GM10248 (cell line): ENCODE measurements at regions of chr5 and their contacts with region 1.

Region 1: GRCh38 chr5:79062436-79062835 is 7.0 kb downstream of the DMGDH start:
- DNase-seq: no peak
- CTCF ChIP-seq: no peak

Region 2: DNA sequence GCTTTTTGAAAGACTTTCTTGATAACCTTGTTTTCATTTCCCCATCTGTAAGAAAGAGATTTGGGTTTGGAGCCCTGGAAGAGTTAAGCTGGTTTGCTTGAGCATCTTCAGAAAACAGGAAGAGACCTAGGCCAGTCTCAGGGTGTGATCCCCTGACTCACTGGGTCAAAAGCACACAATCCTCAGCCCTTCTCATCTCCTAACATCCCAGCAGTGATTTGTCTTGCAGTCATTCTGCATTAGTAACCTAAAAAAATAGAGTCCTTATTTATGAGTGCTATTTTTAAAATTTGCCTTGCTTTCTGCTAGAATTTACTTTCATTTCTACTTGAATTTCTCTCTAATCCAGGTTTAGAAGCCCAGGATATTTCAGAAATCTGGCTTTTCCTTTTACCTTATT is 61.0 kb before region 1 on chr5:
- CTCF ChIA-PET with region 1: no interaction called
- POLR2A ChIA-PET with region 1: no interaction called
- DNase-seq: no peak
- CTCF ChIP-seq: no peak

Region 3: DNA sequence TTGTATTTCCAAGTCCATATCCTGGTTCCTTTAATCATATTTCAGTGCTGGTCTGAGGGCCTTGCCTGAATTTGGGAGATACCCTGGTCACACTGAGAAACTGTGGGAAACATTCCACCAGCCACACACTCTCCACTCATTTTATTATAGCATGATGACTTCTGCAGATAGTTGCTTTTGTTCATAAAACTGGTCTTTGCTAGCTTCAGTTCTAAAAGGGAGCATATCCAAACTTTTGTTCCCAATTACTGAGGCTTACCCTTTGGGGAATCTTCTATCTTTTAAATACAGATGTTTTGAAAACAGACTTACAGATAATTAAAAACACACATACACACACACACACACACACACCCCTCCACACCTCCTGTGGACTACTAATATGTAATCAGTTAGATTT is 14.0 kb before region 1 on chr5:
- CTCF ChIA-PET with region 1: interaction called, 11 read pairs
- POLR2A ChIA-PET with region 1: no interaction called
- DNase-seq: no peak
- CTCF ChIP-seq: no peak